H1 (cell line): ENCODE measurements at regions of chr10 and their contacts with region 1.

Region 1: GRCh38 chr10:96129387-96130325 is at the start of gene ZNF518A:
- DNase-seq: peak; percentile 92
- H3K4me3 ChIP-seq: peak within 1 kb of the TSS; percentile 74 to 78 (median 76)
- H3K27ac ChIP-seq: peak within 1 kb of the TSS; percentile 99
- H3K4me1 ChIP-seq: peaks cover 0 to 5% (median 3%) of the 10 kb centered on the region in 4 experiments; a peak in 3 of 7 replicates
- H3K27me3 ChIP-seq: no peaks in the 10 kb centered on the region
- CTCF ChIP-seq: no peak
- EP300 ChIP-seq: no peak
- POLR2A ChIP-seq: peak; percentile 97
- RAD21 ChIP-seq: no peak
- total RNA-seq, gene ZNF518A: 26.8 and 34.8 TPM in 2 replicates

Region 2: DNA sequence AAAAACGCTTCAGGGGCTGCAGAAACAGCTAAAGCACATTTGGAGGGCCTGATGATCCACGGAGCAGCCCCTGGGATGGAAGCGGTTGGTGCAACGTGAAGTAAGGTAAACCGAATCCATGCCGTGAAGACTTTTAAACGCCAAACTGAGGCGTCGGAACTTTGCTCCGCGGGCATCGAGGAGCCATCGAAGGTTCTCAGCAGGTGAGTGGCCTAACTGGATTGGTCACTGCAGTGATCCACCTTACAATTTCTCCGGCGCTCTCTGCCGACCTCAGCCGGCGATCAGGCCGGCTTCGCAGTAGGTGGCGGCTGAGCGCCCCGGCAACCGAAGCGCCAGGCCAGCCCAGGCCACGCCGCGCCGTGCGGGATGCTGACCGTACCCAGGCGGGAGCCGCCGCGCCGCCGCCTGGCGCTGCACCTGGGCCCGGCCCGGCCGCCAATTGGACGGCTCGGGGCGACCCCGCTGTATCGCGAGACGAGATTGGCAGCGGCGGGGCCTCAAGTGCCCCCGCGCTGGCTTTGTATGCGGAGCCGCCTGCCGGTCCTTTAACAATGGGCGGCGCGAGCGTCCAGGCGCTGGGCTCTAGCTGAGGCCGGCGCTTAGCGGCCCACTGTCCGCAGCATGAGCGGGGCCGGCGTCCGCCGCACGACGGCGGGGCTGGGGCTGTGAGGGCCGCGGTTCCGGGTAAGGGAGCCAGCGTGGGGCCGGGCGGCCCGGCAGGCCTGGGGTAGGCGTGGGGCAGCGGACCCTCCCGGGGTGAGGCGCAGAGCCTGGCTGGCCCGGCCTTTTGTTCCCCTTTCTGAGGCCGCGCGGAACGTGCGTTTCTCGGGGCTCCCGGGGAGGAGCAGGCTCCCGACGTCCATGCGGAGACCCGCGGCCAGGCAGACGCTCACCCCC is 86.4 kb before region 1 on chr10 and contains the start of gene CCNJ:
- CTCF ChIA-PET with region 1: interaction called, 6 read pairs
- POLR2A ChIA-PET with region 1: interaction called, 24 read pairs
- DNase-seq: peak; percentile 62 to 90
- H3K4me3 ChIP-seq: peak within 1 kb of the TSS; percentile 81 to 96 (median 85)
- H3K27ac ChIP-seq: peak within 1 kb of the TSS; percentile 88
- H3K4me1 ChIP-seq: no peaks in the 10 kb centered on the region
- H3K27me3 ChIP-seq: peaks cover 0 to 9% (median 4%) of the 10 kb centered on the region in 4 experiments; a peak in 5 of 7 replicates
- CTCF ChIP-seq: no peak
- EP300 ChIP-seq: no peak
- POLR2A ChIP-seq: peak; percentile 91 to 96
- RAD21 ChIP-seq: no peak
- total RNA-seq, gene CCNJ: 34.2 and 34.7 TPM in 2 replicates

Region 3: DNA sequence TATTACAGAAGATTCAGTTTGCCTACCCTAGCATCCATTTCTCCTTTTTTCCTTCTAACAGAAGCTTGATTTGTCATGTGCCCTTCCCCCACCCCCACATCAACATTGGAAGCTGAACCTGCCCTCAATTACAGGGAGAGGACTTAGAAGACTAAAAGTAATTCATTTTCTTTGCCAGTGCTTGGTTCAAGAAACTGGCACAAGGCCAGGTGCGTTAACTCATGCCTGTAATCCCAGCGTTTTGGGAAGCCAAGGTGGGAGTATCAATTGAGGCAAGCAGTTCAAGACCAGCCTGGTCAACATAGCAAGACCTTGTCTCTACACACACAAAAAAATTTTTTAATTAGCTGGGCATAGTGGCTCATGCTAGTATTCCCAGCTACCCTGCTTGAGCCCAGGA is 53.7 kb before region 1 on chr10:
- CTCF ChIA-PET with region 1: no interaction called
- POLR2A ChIA-PET with region 1: interaction called, 14 read pairs
- DNase-seq: no peak
- H3K4me3 ChIP-seq: no peak overlapping the region
- H3K27ac ChIP-seq: no peak overlapping the region
- H3K4me1 ChIP-seq: peaks cover 0 to 4% (median 0%) of the 10 kb centered on the region in 4 experiments; a peak in 2 of 7 replicates
- H3K27me3 ChIP-seq: no peaks in the 10 kb centered on the region
- CTCF ChIP-seq: no peak
- EP300 ChIP-seq: no peak
- POLR2A ChIP-seq: no peak
- RAD21 ChIP-seq: no peak

Region 4: DNA sequence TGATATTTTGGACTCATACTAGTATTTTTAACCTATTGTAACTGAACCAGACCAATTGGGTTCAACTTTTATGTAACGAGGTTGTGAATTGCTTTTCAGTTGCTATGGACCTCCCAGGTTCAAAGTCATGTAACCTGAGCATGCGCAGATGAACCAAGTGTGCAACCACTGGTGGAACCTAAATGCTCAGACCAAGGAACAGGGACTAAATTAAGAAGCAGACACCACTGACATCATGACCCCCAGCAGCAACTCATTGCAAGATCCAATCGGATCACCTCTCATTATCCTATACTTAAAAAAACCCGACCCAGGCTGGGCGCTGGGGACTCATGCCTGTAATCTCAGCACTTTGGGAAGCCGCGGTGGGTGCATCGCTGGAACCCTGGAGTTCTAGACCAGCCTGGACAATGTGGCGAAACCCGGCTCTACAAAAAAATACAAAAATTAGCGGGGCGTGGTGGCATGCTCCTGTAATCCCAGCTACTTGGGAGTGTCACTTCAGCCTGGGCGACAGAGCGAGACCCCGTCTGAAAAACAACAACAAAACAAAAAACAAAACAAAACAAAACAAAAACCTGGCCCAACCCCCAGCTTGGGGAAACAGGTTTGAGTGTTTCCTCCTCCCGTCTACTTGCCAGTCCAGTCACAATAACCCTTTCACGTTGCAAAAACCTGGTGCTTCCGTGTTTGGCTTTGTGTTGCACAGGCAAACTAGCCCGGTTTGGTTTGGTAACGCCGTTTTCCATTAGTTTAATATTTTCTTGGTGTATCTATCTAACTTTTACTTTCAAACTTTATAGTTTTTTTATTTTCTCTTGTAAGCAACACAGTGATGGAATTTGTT is 10.8 kb before region 1 on chr10:
- CTCF ChIA-PET with region 1: interaction called, 3 read pairs
- POLR2A ChIA-PET with region 1: interaction called, 26 read pairs
- DNase-seq: no peak
- H3K4me3 ChIP-seq: no peak overlapping the region
- H3K27ac ChIP-seq: no peak overlapping the region
- H3K4me1 ChIP-seq: peaks cover 0 to under 1% (median 0%) of the 10 kb centered on the region in 4 experiments; a peak in 1 of 7 replicates
- H3K27me3 ChIP-seq: no peaks in the 10 kb centered on the region
- CTCF ChIP-seq: no peak
- EP300 ChIP-seq: no peak
- POLR2A ChIP-seq: no peak
- RAD21 ChIP-seq: no peak

Region 5: DNA sequence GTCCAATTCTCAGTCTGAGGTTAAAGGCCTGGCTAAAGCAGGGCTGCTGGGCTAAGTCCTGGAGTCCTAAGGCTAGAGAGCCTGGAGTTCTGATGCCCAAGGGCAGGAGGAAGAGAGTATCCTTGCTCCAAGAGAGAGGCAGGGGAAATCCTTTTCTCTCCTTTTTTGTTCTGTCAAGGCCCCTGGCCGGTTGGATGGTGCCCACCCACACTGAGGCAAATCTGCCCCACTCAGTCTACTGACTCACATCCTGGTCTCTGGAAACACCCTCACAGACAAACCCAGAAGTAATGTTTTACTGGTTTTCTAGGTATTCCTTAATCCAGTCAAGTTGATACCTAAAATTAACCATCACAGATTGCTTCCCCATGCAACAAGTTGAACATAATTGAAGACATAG is 23.4 kb after region 1 on chr10:
- CTCF ChIA-PET with region 1: no interaction called
- POLR2A ChIA-PET with region 1: interaction called, 20 read pairs
- DNase-seq: no peak
- H3K4me3 ChIP-seq: no peak overlapping the region
- H3K27ac ChIP-seq: no peak overlapping the region
- H3K4me1 ChIP-seq: no peaks in the 10 kb centered on the region
- H3K27me3 ChIP-seq: no peaks in the 10 kb centered on the region
- CTCF ChIP-seq: no peak
- EP300 ChIP-seq: no peak
- POLR2A ChIP-seq: no peak
- RAD21 ChIP-seq: no peak

Region 6: DNA sequence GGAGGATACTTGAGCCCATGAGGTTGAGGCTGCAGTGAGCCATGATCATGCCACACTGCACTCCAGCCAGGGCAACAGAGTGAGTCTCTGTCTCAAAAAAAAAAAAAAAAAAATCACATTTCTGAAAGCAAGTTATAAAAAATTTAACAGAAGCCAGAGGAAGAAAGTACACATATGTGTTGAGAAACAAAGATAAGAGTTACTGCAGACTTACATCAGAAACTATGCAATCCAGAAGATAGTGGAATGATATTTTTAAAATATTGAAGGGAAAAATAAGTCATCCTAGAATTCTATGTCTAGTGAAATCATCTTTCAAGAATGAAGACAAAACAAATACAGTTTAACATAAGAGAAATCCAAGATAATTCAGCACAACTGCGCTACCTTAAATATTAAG is 47.3 kb after region 1 on chr10:
- CTCF ChIA-PET with region 1: no interaction called
- POLR2A ChIA-PET with region 1: no interaction called
- DNase-seq: no peak
- H3K4me3 ChIP-seq: no peak overlapping the region
- H3K27ac ChIP-seq: no peak overlapping the region
- H3K4me1 ChIP-seq: no peaks in the 10 kb centered on the region
- H3K27me3 ChIP-seq: no peaks in the 10 kb centered on the region
- CTCF ChIP-seq: no peak
- EP300 ChIP-seq: no peak
- POLR2A ChIP-seq: no peak
- RAD21 ChIP-seq: no peak